ENCODE measurements at regions of chr17 and their contacts with region 1.

Region 1: DNA sequence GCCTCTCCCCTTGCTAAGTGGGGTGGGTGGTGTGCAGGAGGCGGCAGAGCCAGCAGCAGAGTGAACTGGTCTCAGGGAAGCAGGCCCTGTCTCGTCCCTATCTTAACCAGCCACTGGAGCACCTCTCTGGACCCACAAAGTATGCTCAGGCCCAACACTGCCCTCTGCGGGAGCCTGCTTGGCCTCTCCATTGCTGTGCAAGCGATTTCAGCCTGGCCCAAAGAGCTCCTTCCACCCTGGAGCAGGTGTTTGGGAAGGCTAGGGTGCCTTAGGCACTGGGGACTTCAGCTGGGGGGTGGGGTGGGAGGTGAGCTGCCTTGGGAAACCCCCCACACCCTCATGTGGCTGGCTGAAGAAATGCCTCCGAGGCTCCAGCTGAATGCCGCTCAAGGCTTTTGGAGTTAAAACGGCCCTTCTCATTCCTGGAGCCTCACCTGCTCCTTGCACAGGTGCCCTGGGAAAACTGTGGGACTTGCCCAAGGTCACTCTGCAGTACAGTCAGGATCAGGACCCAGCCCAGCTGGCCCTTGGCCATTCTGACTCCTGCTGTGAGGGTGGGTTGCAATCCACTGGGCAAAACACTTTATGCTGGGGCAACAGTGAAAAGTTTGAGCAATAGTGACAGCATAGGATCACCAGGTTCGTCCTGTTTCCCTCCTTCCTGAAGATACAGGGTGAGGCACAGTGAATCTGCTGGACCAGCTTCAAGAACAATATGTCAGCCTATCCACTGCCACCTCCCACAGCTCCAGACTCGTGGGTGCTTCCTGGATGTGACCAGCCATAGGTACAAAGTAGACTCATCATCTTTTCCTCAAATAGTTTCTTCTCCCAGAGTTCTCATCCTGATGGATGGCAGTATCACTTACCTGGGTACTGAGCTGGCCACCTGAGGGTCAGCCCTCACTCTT is 5.9 kb upstream of the UBE2O start:
- DNase-seq: no peak
- ATAC-seq: peak; percentile 25
- H3K4me3 Mint-ChIP-seq: no peak overlapping the region
- H3K27ac Mint-ChIP-seq: no peak overlapping the region
- H3K4me1 Mint-ChIP-seq: no peaks in the 10 kb centered on the region
- H3K27me3 Mint-ChIP-seq: peaks cover 16% of the 10 kb centered on the region

Region 2: DNA sequence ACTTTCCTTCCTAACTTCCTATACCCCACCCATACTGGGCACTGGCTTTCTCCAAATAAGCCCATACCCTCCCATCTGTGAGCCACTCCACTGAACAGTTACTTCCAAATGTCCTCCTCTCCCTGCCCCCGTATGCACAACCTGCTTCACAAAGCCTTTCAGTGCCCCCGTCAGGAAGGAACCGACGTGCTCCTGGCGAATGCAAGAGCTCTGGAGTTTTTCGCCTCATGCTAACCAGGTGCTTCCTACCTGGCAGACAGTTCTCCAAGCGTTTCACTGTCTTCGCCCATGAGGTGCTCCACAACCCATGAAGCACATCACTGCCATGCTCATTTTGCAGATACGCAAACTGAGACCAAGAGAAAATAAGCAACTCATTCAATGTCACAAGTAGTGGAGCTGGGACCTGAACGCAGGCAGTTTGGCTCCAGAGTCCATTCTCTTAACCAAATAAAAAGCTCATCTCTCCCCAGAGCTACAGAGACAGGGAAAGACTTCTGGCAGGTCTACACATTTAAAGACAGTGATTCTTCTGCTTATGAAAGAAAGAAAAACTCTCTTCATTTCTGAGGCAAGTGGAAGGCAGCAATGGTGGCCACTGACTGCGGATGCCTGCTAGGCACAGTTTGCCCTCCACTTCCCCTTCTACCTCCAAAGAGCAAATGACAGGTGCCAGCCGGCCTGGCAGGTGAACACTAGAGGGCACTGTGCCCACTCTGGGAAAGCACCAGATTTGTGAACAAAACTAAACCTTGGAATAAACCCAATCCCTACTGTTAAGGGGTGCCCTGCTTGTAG is 50.6 kb before region 1 on chr17:
- CTCF ChIA-PET with region 1: interaction called, 21 read pairs
- DNase-seq: peak; percentile 80
- ATAC-seq: peak; percentile 81
- H3K4me3 Mint-ChIP-seq: no peak overlapping the region
- H3K27ac Mint-ChIP-seq: no peak overlapping the region
- H3K4me1 Mint-ChIP-seq: peaks cover 4% of the 10 kb centered on the region
- H3K27me3 Mint-ChIP-seq: no peaks in the 10 kb centered on the region

Region 3: DNA sequence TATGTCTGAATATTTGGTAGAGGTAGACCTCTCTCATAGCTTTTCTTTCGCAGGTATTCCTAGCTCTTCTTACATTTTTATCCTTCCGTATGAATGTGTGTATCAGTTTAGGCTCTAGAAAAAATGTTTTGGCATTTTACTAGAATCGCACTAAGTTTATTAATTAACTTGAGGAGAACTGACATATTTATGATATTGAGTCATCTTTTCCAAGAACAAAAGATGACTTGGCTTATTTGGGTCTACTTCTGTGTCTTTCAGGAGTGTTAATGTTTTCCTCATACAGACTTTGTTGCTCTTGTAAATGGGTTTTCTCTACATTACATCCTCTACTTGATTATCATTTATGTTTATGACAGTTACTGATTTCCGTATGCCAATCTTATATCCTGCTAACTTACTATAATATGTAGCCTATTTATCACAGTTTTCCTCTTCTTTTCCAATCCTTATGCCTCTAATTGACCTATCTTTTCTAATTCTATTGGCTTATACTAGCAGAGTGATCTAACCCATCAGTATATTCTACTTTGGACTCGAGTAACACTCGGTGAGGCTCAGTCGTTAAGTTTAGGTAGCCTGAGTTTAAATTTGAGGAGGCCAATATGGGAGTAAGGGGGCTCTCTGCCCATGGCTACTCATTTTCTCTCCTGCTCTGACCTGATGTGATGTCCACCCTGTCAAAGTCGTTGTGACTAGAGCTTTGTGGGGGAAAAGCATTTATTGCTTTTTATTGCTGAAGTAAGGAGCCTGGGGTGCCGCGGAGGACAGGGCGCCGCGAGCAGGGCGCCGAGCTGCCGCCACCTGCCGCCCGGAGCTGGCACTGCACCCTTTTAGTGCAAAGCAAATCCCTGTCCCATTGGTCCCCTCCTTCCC is 164.7 kb after region 1 on chr17:
- CTCF ChIA-PET with region 1: no interaction called
- DNase-seq: peak; percentile 80
- ATAC-seq: peak; percentile 95
- H3K4me3 Mint-ChIP-seq: no peak overlapping the region
- H3K27ac Mint-ChIP-seq: no peak overlapping the region
- H3K4me1 Mint-ChIP-seq: peaks cover 5% of the 10 kb centered on the region
- H3K27me3 Mint-ChIP-seq: peaks cover 19% of the 10 kb centered on the region

Region 4: GRCh38 chr17:76659928-76660614 is 201.2 kb after region 1 on chr17:
- CTCF ChIA-PET with region 1: no interaction called
- DNase-seq: no peak
- ATAC-seq: peak; percentile 70
- H3K4me3 Mint-ChIP-seq: no peak overlapping the region
- H3K27ac Mint-ChIP-seq: peak overlapping the region; percentile 69
- H3K4me1 Mint-ChIP-seq: peaks cover 28% of the 10 kb centered on the region
- H3K27me3 Mint-ChIP-seq: peaks cover 7% of the 10 kb centered on the region